ENCODE measurements at regions of chr12 and their contacts with region 1.

Region 1: GRCh38 chr12:57899010-57899662 is 42.2 kb upstream of the ATP23 start:
- DNase-seq: no peak
- ATAC-seq: peak in 1 of 2 experiments; percentile 10; a peak in 2 of 6 replicates
- H3K4me3 ChIP-seq: no peak overlapping the region
- H3K27ac ChIP-seq: peak overlapping the region; percentile 28 to 61; a peak in 5 of 6 replicates
- H3K4me1 ChIP-seq: peaks cover 36% of the 10 kb centered on the region
- CTCF ChIP-seq: no peak
- EP300 ChIP-seq: no peak
- POLR2A ChIP-seq: no peak
- RAD21 ChIP-seq: no peak

Region 2: DNA sequence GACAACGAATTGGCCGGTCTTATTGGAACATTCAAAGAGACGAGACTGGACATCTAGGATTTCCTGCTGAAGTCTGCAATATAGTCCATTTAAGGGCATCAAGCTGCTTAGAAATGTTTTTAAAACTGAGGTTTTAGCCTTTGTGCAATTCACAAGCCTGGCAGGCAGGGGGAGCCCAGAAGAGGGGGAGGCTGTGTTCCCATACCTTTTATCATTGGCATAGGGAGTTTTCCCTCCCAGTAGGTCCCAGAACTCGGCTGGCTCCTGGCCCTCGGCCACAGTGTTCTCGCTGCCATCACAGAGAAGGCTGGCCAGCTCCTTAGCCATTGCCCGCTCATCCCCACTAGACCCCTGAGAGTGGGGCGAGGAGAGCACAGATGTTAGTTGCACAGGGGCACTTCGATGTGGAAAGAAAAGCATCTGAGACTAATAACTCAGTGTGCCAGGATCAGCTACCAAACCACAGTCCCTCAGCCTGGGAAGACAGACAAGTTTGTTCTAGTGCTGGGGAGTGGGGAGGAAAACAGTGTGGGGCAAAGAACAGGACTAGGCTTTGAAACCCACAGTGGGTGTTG is 95.7 kb before region 1 on chr12:
- CTCF ChIA-PET with region 1: interaction called, 64 read pairs
- POLR2A ChIA-PET with region 1: no interaction called
- DNase-seq: peak; percentile 53 to 69
- ATAC-seq: peak; percentile 86 to 91
- H3K4me3 ChIP-seq: no peak overlapping the region
- H3K27ac ChIP-seq: no peak overlapping the region
- H3K4me1 ChIP-seq: no peaks in the 10 kb centered on the region
- CTCF ChIP-seq: peak; percentile 70
- EP300 ChIP-seq: no peak
- POLR2A ChIP-seq: no peak
- RAD21 ChIP-seq: peak; percentile 61 to 63

Region 3: DNA sequence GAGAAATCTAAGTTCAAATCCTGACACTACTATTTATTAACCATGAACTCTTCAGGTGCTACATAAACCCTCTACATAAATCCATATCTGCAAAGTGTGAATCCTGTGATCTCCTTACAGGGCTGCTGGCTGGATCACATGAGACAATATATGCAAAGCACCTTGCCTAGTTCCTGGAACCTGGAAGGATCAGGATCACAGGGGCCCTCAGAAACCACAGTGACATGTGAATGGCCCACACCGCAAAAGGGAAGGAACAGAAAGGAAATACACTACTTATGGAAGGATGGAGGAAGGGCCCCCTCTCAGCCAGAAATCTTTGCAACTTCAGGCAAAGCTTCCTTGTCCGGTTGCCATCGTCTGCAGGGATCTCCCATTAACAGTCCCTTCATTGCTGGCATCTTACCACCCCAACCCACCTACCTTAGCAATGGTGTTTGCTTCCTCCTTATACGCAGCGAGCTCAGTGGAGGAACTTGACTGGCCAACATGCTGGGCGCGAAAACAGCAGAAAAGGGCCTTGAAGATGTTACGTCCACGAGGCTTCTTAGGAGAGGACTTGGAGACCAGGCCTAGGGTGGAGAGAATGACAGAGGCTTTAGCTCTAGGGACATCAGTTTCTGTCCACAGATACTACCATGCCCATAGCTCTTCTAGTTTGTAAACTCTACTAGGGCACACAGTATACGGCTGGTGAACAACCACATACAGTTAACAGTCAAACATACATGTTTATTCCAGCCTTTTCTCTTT is 69.9 kb before region 1 on chr12:
- CTCF ChIA-PET with region 1: interaction called, 218 read pairs
- POLR2A ChIA-PET with region 1: interaction called, 3 read pairs
- DNase-seq: no peak
- ATAC-seq: no peak
- H3K4me3 ChIP-seq: no peak overlapping the region
- H3K27ac ChIP-seq: no peak overlapping the region
- H3K4me1 ChIP-seq: peaks cover 4% of the 10 kb centered on the region; the same call in 1 of the 3 replicates
- CTCF ChIP-seq: no peak
- EP300 ChIP-seq: no peak
- POLR2A ChIP-seq: no peak
- RAD21 ChIP-seq: no peak

Region 4: DNA sequence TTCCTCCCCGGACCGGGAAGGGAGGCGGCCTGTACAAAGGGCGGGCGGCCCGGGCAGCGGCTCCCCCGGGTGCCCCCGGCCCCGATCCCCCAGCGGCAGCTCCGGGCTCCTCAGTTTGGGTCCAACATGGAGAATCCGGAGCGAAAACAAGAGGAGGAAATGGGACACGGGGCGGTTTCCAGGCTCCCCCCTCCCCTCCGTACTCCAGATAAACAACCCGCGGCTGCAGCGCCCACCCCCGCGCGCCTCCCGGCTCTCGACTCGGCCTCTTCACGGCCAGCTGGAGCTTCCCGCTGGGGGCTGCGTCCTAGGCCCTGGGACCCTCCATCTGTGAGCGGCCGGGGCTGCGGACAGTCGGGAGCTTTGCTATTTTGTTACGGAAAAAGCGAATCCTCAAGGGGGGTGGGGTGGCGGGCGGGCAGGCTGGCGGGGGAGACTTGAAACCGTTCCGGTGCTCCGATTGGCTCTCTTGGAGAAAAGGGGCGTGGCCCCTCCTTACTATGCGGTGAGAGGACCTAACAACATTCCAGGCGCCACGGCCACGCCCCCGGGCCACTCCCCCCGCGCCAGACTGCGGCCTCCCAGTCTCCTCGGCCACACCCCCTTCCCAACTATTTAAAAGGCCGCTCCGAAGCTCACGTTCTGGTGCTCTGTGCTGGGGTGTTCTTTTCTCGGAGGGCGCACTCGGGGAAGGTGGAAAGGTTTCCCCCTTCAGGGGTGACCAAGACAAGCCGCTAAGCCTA is 52.4 kb before region 1 on chr12 and contains the start of gene CTDSP2:
- CTCF ChIA-PET with region 1: interaction called, 122 read pairs
- POLR2A ChIA-PET with region 1: interaction called, 77 read pairs
- DNase-seq: peak; percentile 99
- ATAC-seq: peak; percentile 66 to 82
- H3K4me3 ChIP-seq: peak within 1 kb of the TSS; percentile 97
- H3K27ac ChIP-seq: peak within 1 kb of the TSS; percentile 90 to 100
- H3K4me1 ChIP-seq: peaks cover 35% of the 10 kb centered on the region
- CTCF ChIP-seq: no peak
- EP300 ChIP-seq: no peak
- POLR2A ChIP-seq: peak; percentile 44
- RAD21 ChIP-seq: no peak
- polyA plus RNA-seq, gene CTDSP2: 87.7 and 114 TPM in 2 replicates

Region 5: DNA sequence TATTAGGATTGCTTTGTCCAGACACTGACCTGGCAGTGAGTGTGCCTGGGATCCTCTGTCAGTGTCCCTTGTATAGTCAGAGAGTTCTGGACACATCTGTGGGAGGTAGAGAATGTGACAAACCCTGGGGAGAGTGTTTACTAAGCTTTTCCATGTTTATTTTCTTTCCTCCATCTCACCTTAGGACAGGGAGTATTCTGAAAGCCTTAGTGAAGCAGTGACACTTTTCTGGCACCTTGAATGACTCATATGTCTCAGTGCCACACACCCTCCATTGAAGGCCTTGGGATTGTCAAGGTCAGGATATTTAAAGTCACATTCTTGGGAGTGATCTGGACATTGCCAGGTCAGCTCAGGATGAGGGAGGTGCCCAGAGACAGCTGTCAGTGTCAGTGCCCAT is 17.7 kb before region 1 on chr12:
- CTCF ChIA-PET with region 1: interaction called, 11 read pairs
- POLR2A ChIA-PET with region 1: interaction called, 3 read pairs
- DNase-seq: no peak
- ATAC-seq: no peak
- H3K4me3 ChIP-seq: no peak overlapping the region
- H3K27ac ChIP-seq: no peak overlapping the region
- H3K4me1 ChIP-seq: peaks cover 7% of the 10 kb centered on the region; the same call in 1 of the 3 replicates
- CTCF ChIP-seq: no peak
- EP300 ChIP-seq: no peak
- POLR2A ChIP-seq: no peak
- RAD21 ChIP-seq: no peak